ENCODE measurements at regions of chr3 and their contacts with region 1.

Region 1: DNA sequence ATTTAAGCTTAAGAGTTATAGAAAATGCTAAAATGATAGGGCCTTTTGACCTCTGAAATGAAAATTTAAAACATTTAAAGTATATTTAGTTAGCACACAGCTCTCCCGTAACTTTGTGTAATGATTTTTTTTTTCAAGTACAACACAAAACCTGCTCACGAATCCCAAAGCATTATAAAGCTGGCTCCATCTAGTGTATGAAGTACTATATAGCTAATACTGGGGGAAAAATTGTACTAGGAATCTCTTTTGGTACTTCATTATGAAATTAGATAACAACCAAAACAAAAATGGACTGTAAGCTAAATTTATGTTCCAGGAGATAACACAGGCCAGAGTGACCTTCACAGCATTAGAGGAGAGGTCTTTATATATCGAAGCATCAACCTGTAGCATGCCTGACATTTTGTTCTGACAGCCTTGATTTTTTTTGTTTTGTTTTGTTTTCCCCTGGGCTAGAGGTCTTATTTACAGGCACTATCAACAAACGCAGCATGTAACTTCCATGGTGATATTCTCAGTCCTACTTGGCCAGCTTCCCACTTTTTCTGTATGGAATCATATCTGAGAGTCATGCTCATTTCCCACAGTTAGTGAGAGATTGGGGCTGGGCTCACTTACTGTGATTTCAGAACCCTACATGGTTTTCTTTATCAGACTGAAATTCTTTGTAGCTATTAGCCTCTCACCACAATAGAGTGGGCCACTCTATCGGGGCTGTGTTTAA is 116.3 kb downstream of the MITF start:
- DNase-seq: no peak
- ATAC-seq: peak; percentile 65

Region 2: DNA sequence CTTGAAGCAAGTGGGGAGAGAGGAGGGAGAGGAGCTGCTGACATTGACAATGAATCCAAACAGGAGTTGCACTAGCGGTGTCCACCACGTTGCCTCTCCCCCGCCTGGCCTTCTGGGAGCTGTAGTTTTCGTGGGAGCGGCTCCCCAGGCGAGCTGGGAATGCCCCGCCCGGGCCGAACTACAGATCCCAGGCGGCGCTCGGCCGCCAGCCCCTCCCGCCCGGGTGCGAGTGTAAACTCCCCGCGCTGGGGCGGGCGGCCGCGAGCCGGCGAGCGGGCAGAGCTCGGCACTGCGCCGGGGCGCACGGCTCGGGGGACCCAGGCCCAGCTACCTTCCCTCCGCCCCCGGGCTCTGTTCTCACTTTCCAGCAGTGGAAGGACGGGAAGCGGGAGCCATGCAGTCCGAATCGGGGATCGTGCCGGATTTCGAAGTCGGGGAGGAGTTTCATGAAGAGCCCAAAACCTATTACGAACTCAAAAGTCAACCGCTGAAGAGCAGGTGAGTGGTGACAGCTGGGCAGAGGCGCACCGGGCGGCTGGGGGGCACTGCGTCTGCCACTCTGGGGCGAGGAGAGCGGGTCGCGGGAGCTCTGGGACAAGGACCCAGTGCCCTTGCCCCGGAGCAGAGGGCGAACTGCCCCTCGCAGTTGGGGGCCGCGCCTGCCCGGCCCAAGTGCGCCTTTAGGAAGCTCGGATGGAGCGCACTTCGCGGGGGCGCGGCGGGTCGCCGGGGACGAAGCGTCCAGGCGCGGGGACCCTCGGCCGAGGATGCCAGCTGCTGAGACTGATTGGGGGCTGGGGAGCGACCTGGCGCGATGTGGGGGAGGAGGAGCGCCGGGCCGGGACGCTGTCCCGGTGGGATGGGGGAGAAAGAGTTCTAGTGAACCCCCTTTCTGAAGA is 116.1 kb before region 1 on chr3 and contains the start of gene MITF:
- intact Hi-C with region 1: loop called (anchors 5 kb)
- DNase-seq: peak; percentile 96
- ATAC-seq: peak; percentile 97
- total RNA-seq, gene MITF: 71.0 TPM

Region 3: DNA sequence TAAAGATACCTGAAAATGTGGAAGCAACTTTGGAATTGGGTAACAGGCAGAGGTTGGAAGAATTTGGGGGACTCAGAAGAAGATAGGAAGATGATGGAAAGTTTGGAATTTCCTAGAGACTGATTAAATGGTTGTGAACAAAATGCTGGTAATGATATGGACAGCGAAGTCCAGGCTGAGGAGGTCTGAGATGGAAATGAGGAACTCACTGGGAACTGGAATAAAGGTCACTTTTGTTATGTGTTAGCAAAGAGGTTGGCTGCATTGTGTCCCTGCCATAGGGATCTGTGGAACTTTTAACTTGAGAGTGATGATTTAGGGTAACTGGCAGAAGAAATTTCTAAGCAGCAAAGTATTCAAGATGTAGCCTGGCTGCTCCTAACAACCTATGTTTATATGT is 103.4 kb before region 1 on chr3:
- intact Hi-C with region 1: no loop called
- DNase-seq: no peak
- ATAC-seq: no peak

Region 4: GRCh38 chr3:69791919-69792399 is 63.6 kb before region 1 on chr3:
- intact Hi-C with region 1: loop called (anchors 5 kb)
- DNase-seq: no peak
- ATAC-seq: peak; percentile 56

Region 5: DNA sequence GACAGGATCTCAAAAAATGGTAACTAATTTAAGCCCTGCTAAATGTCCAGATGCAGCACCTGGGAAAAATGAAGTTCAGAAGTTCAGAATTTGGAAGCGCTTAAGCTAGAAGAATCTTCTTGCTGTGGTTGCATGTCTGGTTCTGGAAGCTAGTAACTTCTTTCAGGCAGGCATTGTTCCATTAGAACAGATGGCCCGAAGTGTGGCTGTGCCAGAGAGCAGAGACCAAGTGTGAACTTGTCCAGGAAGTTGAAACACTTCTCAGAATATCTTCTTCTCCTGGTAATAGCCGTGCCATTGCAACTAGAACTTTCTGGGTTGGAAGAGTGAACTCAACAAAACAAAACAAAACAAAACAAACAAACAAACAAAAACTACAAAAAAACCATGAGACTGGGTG is 36.3 kb before region 1 on chr3:
- intact Hi-C with region 1: loop called (anchors 5 kb)
- DNase-seq: no peak
- ATAC-seq: peak; percentile 77

Measured in Right ventricle myocardium inferior (tissue), 1 donor.